Caco-2 (cell line): ENCODE measurements at regions of chr1 and their contacts with region 1.

Region 1: GRCh38 chr1:119483441-119484200 is 23.4 kb upstream of the HSD3B1 start:
- DNase-seq: peak; percentile 73 to 90
- H3K4me3 ChIP-seq: no peak overlapping the region
- H3K4me3 Mint-ChIP-seq: peak overlapping the region; percentile 54
- H3K27ac Mint-ChIP-seq: peak overlapping the region; percentile 99
- H3K4me1 ChIP-seq: peaks cover 59% of the 10 kb centered on the region
- H3K4me1 Mint-ChIP-seq: peaks cover 47% of the 10 kb centered on the region
- H3K27me3 ChIP-seq: no peaks in the 10 kb centered on the region
- H3K27me3 Mint-ChIP-seq: no peaks in the 10 kb centered on the region
- CTCF ChIP-seq: no peak

Region 2: DNA sequence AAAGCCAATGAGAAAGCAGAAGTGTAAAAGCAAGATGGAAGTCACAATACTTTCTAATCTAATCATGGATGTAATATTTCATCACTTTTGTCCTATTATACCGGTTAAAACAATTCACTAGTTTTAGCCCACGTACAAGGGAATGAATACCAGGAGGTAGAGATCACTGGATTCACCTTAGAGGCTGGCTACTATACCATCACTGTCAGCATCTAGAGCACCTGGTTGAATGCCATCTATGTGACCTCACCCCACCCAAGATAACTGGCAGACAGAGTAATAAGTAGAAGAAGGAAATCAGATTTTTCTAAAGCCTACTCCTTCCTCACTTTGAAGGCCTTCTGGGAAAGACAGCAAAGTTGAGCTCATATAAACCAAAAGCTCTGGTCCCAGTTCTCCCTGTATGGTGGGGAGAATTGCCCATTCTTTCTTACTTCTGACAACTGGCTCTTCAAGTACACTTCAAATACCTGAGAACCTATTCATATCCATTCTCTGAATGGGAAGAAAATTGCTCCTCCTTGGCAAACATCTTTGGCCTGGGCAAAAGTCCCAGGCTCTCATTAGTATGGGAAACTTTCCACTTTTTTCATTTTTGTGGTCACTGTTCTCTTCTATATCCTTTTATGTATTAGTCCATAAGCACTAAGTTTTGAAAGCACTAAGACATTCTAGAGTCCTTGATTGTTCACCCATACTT is 48.2 kb after region 1 on chr1:
- CTCF ChIA-PET with region 1: no interaction called
- POLR2A ChIA-PET with region 1: no interaction called
- intact Hi-C with region 1: loop called (anchors 2 kb)
- DNase-seq: no peak
- H3K4me3 ChIP-seq: no peak overlapping the region
- H3K4me3 Mint-ChIP-seq: no peak overlapping the region
- H3K27ac Mint-ChIP-seq: no peak overlapping the region
- H3K4me1 ChIP-seq: peaks cover 15% of the 10 kb centered on the region
- H3K4me1 Mint-ChIP-seq: peaks cover 17% of the 10 kb centered on the region
- H3K27me3 ChIP-seq: no peaks in the 10 kb centered on the region
- H3K27me3 Mint-ChIP-seq: no peaks in the 10 kb centered on the region
- CTCF ChIP-seq: no peak

Region 3: DNA sequence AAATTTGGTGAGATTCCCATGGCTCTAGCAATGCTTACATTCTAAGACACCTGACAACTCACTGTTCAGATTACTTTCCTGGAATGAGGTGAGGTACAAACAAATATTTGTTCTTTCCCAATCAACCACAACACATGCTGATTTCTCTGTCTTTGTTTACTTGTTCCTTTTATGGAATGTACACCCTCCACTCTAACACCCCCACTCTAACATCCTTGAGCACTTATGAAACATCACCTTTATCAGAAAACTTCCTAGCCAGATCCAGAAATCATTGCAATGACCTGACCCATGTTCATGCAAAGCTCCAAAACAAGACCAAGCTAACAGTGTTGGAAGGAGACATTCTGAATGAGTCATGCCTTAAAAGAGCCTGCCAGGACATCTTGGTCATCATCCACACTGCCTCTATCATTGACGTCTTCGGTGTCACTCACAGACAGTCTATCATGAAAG is 58.9 kb after region 1 on chr1:
- CTCF ChIA-PET with region 1: no interaction called
- POLR2A ChIA-PET with region 1: no interaction called
- intact Hi-C with region 1: loop called (anchors 2 kb)
- DNase-seq: no peak
- H3K4me3 ChIP-seq: no peak overlapping the region
- H3K4me3 Mint-ChIP-seq: peak overlapping the region; percentile 18
- H3K27ac Mint-ChIP-seq: peak overlapping the region; percentile 74
- H3K4me1 ChIP-seq: peaks cover 16% of the 10 kb centered on the region; the same call in 1 of the 2 replicates
- H3K4me1 Mint-ChIP-seq: peaks cover 24% of the 10 kb centered on the region
- H3K27me3 ChIP-seq: no peaks in the 10 kb centered on the region
- H3K27me3 Mint-ChIP-seq: no peaks in the 10 kb centered on the region
- CTCF ChIP-seq: no peak